ENCODE measurements at regions of chr12 and their contacts with region 1.

Region 1: GRCh38 chr12:130335517-130336392 is 1.9 kb upstream of the PIWIL1 start:
- DNase-seq: peak in 1 of 2 experiments; percentile 55
- H3K4me3 ChIP-seq: no peak overlapping the region
- H3K27ac ChIP-seq: no peak overlapping the region
- H3K4me1 ChIP-seq: peaks cover 0 to 7% (median 6%) of the 10 kb centered on the region in 4 experiments; a peak in 6 of 7 replicates
- H3K27me3 ChIP-seq: peaks cover 0 to 8% (median 2%) of the 10 kb centered on the region in 4 experiments; a peak in 3 of 7 replicates
- CTCF ChIP-seq: peak in 2 of 3 experiments; percentile 65 to 67; a peak in 2 of 4 replicates
- EP300 ChIP-seq: no peak
- POLR2A ChIP-seq: no peak
- RAD21 ChIP-seq: peak; percentile 90 to 94

Region 2: DNA sequence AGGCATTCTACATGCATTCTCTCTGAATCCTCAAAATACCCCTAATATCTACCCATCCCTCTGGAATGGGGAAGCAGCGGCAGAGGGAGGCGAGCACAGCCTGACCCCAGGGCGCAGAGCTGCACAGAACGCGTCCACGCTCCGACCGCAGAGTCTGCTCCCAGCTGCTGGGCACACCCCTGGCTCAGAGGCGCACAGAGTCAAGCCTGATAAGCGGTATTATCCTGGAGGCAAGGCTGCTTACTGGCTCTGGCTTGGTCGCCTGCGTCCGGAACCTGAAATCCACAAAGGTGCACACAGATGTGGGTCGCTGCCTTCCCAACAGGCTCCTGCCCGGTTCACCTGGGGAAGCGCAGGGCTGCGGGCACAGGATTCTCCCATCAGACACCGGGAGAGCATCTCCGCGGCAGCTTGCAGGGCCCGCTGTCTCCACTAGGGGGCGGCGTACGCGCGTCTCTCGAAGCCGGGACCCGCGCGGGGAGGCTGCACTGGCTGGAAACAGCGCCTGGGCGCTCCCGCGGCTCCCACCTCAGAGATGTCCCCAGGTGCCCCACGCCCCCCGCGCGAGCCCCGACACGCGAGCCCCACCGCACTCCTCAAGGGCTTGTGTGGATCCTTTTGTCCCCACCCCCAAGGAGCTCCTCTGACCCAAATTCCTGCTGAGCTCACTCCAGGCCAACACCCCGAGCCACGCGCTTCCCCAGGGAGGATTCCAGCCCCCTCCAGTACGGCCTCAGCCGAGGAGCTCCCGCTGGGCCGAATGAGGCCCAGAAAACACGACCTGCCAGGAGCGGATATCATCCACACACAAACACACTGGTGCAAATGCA is 293.6 kb before region 1 on chr12:
- CTCF ChIA-PET with region 1: interaction called, 63 read pairs
- POLR2A ChIA-PET with region 1: no interaction called
- DNase-seq: peak in 1 of 2 experiments; percentile 99
- H3K4me3 ChIP-seq: peak overlapping the region in 1 of 4 experiments; percentile 29; a peak in 1 of 8 replicates
- H3K27ac ChIP-seq: no peak overlapping the region
- H3K4me1 ChIP-seq: peaks cover 0 to 13% (median 5%) of the 10 kb centered on the region in 4 experiments; a peak in 5 of 7 replicates
- H3K27me3 ChIP-seq: peaks cover 22 to 81% (median 55%) of the 10 kb centered on the region in 4 experiments
- CTCF ChIP-seq: peak; percentile 91 to 95 (median 93)
- EP300 ChIP-seq: no peak
- POLR2A ChIP-seq: no peak
- RAD21 ChIP-seq: peak; percentile 82 to 92

Region 3: DNA sequence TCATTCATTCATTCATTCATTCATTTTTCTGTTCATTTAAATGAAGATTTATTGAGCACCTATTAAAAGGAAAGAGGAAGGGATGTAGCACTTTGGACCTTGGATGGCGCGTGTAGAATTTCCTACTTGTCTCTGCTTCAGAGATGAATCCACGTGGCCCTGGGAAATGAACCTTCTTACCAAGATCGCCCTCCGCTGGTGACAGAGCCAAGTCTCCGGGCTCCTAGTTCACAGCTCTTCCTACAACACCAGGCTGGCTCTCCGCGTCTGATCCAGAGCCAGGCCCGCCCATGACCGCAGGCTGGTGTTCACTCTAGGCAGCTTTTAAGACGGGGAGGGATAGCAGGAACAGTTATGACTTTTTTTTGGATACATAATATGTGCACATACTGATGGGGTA is 69.0 kb before region 1 on chr12:
- CTCF ChIA-PET with region 1: interaction called, 18 read pairs
- POLR2A ChIA-PET with region 1: no interaction called
- DNase-seq: peak; percentile 44 to 66
- H3K4me3 ChIP-seq: no peak overlapping the region
- H3K27ac ChIP-seq: no peak overlapping the region
- H3K4me1 ChIP-seq: no peaks in the 10 kb centered on the region
- H3K27me3 ChIP-seq: peaks cover 0 to 14% (median 5%) of the 10 kb centered on the region in 4 experiments; a peak in 4 of 7 replicates
- CTCF ChIP-seq: peak; percentile 59 to 83 (median 64)
- EP300 ChIP-seq: no peak
- POLR2A ChIP-seq: no peak
- RAD21 ChIP-seq: peak; percentile 76 to 82

Region 4: DNA sequence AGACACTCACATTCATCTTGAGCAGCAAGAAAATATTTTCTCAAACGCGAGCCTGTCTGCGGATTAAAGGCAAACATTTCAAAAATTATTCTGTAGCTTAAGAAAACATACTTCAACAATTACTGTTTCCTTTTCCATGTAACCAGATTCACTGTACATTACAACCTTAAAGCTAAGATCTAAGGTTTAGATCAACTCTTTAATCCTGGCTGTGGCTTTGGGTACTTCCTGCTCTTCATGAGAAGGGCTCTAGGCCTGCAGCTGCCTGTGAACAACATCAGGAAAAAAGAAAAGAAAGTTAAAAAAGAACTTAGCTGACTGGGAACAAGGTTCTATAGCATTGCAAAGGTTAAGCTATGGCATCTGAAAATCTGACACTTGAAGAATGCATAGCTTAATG is 19.5 kb before region 1 on chr12:
- CTCF ChIA-PET with region 1: interaction called, 10 read pairs
- POLR2A ChIA-PET with region 1: no interaction called
- DNase-seq: no peak
- H3K4me3 ChIP-seq: no peak overlapping the region
- H3K27ac ChIP-seq: no peak overlapping the region
- H3K4me1 ChIP-seq: no peaks in the 10 kb centered on the region
- H3K27me3 ChIP-seq: peaks cover 0 to 1% (median under 1%) of the 10 kb centered on the region in 4 experiments; a peak in 3 of 7 replicates
- CTCF ChIP-seq: no peak
- EP300 ChIP-seq: no peak
- POLR2A ChIP-seq: no peak
- RAD21 ChIP-seq: no peak

Region 5: GRCh38 chr12:130601327-130601726 is 265.6 kb after region 1 on chr12:
- CTCF ChIA-PET with region 1: no interaction called
- POLR2A ChIA-PET with region 1: no interaction called
- DNase-seq: no peak
- H3K4me3 ChIP-seq: no peak overlapping the region
- H3K27ac ChIP-seq: no peak overlapping the region
- H3K4me1 ChIP-seq: no peaks in the 10 kb centered on the region
- H3K27me3 ChIP-seq: peaks cover 0 to 2% (median 0%) of the 10 kb centered on the region in 4 experiments; a peak in 1 of 7 replicates
- CTCF ChIP-seq: no peak
- EP300 ChIP-seq: no peak
- POLR2A ChIP-seq: no peak
- RAD21 ChIP-seq: no peak

Measured in H1 (cell line).